ENCODE measurements at regions of chr10 and their contacts with region 1.

Region 1: DNA sequence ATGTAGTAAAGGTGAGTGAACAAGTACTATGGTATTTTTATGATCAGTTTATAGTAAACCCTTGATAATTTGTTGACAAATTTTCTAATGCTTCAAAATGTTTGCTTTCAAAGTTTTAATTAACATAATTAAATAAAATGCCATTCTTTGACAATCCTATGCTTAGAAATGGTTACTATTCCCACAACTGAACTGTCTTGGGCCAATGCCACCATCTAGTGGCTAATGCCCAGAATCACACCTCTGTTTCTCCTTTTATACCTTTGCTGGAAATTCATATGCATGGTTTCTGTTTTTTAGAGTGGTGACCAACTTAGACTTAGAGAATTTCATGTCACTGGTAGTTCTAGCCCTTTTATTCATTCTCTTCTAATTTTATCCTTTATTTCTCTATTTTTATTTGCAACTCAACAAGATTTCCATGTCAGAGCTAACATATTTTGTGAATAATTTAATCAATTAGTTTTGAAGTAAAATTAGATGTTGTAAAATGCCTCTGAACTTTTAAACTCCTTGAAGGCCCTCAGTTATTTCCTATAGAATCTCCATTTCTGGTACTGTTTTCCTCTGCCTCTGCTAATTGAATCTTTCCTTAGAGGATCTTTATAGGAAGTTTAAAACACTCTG is 31.1 kb downstream of the PCGF5 start:
- DNase-seq: peak; percentile 54
- ATAC-seq: 0 out of 3 replicates have a peak, but pooled peaks have one; percentile 46
- H3K4me3 ChIP-seq: no peak overlapping the region
- H3K27ac ChIP-seq: no peak overlapping the region
- H3K4me1 ChIP-seq: peaks cover 3% of the 10 kb centered on the region
- H3K27me3 ChIP-seq: no peaks in the 10 kb centered on the region
- CTCF ChIP-seq: peak; percentile 81
- EP300 ChIP-seq: no peak
- POLR2A ChIP-seq: no peak
- RAD21 ChIP-seq: peak; percentile 86

Region 2: GRCh38 chr10:90912174-90912573 is 339.4 kb before region 1 on chr10:
- CTCF ChIA-PET with region 1: interaction called, 17 read pairs
- POLR2A ChIA-PET with region 1: no interaction called
- in situ Hi-C with region 1: loop called (anchors 5 kb)
- intact Hi-C with region 1: loop called (anchors 1 kb)
- DNase-seq: no peak
- ATAC-seq: no peak
- H3K4me3 ChIP-seq: no peak overlapping the region
- H3K27ac ChIP-seq: no peak overlapping the region
- H3K4me1 ChIP-seq: peaks cover 16% of the 10 kb centered on the region
- H3K27me3 ChIP-seq: no peaks in the 10 kb centered on the region
- CTCF ChIP-seq: no peak
- EP300 ChIP-seq: no peak
- POLR2A ChIP-seq: no peak
- RAD21 ChIP-seq: no peak

Region 3: DNA sequence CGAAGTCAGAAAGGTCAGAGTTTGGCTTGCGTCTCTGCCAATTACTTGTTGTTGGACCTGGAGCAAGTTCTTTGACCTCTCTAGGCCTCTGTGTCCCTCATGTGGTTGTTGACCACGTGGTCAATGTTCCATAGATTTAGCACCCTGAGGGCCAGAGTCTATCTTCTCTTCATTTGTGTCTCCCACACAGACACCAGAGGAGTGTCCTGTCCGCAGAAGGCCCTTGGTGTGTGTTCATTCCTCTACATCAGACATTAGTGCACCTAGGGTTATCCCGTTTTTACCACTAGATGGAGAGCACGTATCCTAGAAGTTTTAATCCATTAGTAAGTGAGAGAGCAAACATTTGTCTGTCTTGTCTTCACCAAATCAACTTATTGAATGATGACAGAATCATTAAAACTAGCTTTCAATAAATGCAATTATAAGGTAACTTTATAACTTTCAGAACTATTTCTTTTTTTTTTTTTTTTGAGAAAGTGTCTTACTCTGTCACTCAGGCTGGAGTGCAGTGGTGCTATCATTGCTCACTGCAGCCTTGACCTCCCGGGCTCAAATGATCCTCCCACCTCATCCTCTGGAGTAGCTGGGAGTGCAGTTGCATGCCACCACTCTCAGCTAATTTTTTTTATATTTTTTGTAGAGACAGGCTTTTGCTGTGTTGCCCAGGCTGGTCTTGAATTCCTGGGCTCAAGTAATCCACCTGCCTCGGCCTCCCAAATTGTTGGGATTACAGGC is 208.2 kb before region 1 on chr10:
- CTCF ChIA-PET with region 1: interaction called, 19 read pairs
- POLR2A ChIA-PET with region 1: no interaction called
- in situ Hi-C with region 1: no loop called
- intact Hi-C with region 1: loop called (anchors 1 kb)
- DNase-seq: peak; percentile 51
- ATAC-seq: peak; percentile 99
- H3K4me3 ChIP-seq: no peak overlapping the region
- H3K27ac ChIP-seq: no peak overlapping the region
- H3K4me1 ChIP-seq: peaks cover 8% of the 10 kb centered on the region; the same call in 1 of the 2 replicates
- H3K27me3 ChIP-seq: no peaks in the 10 kb centered on the region
- CTCF ChIP-seq: peak; percentile 70
- EP300 ChIP-seq: no peak
- POLR2A ChIP-seq: no peak
- RAD21 ChIP-seq: peak; percentile 38; the same call in 1 of the 2 replicates

Region 4: GRCh38 chr10:91150631-91151030 is 100.9 kb before region 1 on chr10:
- CTCF ChIA-PET with region 1: no interaction called
- POLR2A ChIA-PET with region 1: no interaction called
- in situ Hi-C with region 1: no loop called
- intact Hi-C with region 1: no loop called
- DNase-seq: no peak
- ATAC-seq: no peak
- H3K4me3 ChIP-seq: no peak overlapping the region
- H3K27ac ChIP-seq: no peak overlapping the region
- H3K4me1 ChIP-seq: no peaks in the 10 kb centered on the region
- H3K27me3 ChIP-seq: no peaks in the 10 kb centered on the region
- CTCF ChIP-seq: no peak
- EP300 ChIP-seq: no peak
- POLR2A ChIP-seq: no peak
- RAD21 ChIP-seq: no peak

Region 5: GRCh38 chr10:91163269-91163868 is 88.2 kb before region 1 on chr10:
- CTCF ChIA-PET with region 1: no interaction called
- POLR2A ChIA-PET with region 1: interaction called, 7 read pairs
- in situ Hi-C with region 1: no loop called
- intact Hi-C with region 1: loop called (anchors 1 kb)
- DNase-seq: peak; percentile 41
- ATAC-seq: peak; percentile 75
- H3K4me3 ChIP-seq: peak overlapping the region; percentile 91 to 93 (median 93)
- H3K27ac ChIP-seq: peak overlapping the region; percentile 98
- H3K4me1 ChIP-seq: peaks cover 40% of the 10 kb centered on the region
- H3K27me3 ChIP-seq: no peaks in the 10 kb centered on the region
- CTCF ChIP-seq: peak; percentile 4; the same call in 1 of the 2 replicates
- EP300 ChIP-seq: no peak; a peak in 1 of 4 replicates
- POLR2A ChIP-seq: peak; percentile 61 to 80
- RAD21 ChIP-seq: peak; percentile 48